ENCODE measurements at regions of chr17 and their contacts with region 1.

Region 1: DNA sequence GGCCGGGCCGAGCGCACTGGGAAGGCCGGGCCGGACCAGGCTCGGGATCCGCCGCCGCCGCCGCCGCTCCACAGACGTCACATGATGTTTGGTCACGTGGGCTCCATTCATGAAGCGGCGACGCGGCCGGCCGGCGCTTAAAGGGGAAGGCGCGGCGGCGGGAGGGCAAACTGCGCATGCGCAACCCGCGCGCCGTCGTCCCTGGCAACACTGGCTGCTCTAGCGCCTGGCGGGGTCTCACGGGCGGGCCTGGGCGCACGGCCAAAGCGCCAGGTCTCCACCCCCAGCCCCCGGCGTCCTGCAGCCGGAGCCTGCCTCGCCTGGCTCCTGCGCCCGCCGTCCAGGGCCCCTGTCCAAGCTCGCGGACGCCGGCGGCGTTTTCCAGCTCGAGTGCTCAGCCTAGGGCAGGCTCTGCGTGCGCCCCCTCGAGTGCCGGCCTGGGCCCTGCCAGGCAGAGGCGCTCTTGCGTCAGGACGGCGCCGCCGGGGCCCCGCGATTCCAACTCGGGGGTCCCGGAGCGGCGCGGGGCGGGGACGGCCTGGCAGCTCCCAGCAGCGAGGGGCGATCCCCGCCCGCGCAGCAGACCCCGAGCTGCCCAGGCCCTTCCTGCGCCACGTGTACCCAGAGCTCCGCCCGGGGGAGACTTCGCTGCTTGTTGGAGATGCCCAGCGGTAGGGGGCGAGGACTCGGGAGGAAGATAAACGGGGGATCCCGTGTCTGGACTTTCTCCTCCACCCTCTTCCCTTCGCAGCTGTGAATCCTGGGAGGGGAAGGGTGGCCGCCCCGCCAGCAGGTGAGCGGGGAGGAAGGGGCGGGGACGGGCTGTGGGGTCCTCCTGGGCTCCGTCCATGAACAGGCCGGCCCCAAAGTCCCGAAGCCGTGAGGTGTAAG is at the start of gene MAFG:
- DNase-seq: peak; percentile 96 to 98
- ATAC-seq: peak; percentile 20 to 40
- H3K4me3 ChIP-seq: peak within 1 kb of the TSS; percentile 90
- H3K27ac ChIP-seq: peak within 1 kb of the TSS; percentile 96 to 98
- H3K4me1 ChIP-seq: peaks cover 36% of the 10 kb centered on the region
- CTCF ChIP-seq: peak; percentile 74
- EP300 ChIP-seq: no peak
- POLR2A ChIP-seq: peak; percentile 33
- RAD21 ChIP-seq: peak in 1 of 2 experiments; percentile 54; a peak in 3 of 5 replicates
- polyA plus RNA-seq, gene MAFG: 41.6 and 47.9 TPM in 2 replicates

Region 2: DNA sequence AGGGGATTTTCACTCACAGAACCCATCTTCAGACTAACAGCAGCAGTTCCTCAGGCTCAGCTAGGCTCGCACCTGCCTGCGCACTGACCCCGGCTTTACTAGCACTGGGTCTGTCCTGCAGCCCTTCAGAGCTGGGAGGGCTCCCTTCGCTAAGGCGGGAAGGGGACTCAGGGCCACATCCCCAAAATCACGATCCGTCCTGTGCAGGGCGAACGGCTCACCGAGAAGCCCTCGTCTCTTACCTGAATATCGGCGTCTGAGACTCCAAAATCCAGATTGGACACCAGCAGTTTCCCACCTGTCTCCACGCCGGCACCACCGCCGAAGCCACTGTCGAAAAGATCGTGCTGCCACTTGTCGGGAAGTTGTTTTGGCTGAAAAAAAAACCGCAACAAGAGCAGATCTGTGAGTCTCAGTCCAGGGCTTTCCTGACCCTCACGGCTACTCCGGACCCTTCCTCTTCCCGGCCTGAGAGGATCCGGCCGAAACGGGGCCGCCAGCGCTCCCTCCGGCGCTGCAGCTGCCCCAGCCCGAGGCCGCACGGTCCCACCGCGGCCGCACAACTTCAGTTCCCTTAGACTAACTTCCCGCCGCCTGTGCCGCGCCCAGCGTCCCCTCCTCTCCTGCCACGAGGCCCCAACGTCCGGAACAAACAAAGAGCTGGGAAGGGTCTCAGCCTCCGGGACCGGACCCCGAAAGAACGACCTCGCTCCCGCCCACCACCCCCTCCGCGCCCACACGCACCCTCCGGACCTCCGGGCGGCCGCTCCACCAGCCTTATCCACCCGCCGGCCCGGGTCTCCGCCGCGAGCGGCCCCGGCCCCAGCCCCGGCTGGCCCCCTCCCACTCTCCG is 37.2 kb before region 1 on chr17:
- CTCF ChIA-PET with region 1: interaction called, 12 read pairs
- POLR2A ChIA-PET with region 1: interaction called, 3 read pairs
- DNase-seq: no peak
- ATAC-seq: no peak
- H3K4me3 ChIP-seq: peak overlapping the region; percentile 90
- H3K27ac ChIP-seq: peak overlapping the region; percentile 94 to 98
- H3K4me1 ChIP-seq: peaks cover 27% of the 10 kb centered on the region
- CTCF ChIP-seq: no peak
- EP300 ChIP-seq: no peak
- POLR2A ChIP-seq: no peak
- RAD21 ChIP-seq: no peak

Region 3: GRCh38 chr17:81911277-81911961 is 16.5 kb before region 1 on chr17 and contains the start of gene PCYT2:
- CTCF ChIA-PET with region 1: interaction called, 68 read pairs
- POLR2A ChIA-PET with region 1: interaction called, 6 read pairs
- DNase-seq: peak; percentile 93 to 99
- ATAC-seq: peak; percentile 72 to 83
- H3K4me3 ChIP-seq: peak within 1 kb of the TSS; percentile 71
- H3K27ac ChIP-seq: peak within 1 kb of the TSS; percentile 62 to 88
- H3K4me1 ChIP-seq: peaks cover 14% of the 10 kb centered on the region
- CTCF ChIP-seq: no peak
- EP300 ChIP-seq: no peak
- POLR2A ChIP-seq: peak; percentile 31; the same call in 1 of the 2 replicates
- RAD21 ChIP-seq: no peak
- polyA plus RNA-seq, gene PCYT2: 7.1 and 7.7 TPM in 2 replicates

Region 4: DNA sequence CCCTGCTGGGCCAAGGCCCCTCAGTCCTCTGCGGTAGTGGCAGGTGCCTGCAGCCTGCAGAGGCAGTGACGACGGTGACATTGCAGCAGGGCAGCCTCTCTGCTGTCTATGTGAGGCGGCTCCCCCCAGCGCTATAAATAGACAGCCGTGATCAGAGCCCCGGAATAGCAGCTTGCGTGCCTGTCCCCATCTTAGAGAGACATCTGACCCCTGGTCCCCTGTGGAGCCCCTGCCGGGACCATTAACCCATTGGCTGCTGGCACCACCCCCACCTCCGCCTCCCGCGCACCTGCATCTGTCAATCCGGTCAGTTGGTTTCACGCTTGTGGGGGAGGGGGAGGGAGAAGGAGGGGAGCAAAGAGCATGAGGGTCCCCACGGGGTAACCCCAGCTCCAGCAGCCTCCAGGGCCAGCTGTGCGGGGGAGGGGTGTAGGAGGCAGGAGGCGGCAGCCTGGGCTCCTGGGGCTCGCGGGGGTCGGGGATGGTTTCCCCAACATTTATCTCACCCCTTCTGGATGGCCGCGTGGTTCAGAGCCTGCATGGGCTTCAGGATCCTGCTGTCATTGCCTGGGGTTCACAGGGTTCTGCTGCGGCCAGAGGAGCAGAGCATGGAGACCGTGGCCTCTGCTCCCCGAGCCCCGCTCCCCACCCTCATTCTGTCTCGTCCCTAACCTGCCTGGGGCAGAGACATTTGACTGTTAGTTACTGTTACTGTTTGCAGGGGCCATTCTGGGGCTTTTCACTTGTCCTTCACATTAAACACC is 14.1 kb after region 1 on chr17:
- CTCF ChIA-PET with region 1: interaction called, 16 read pairs
- POLR2A ChIA-PET with region 1: interaction called, 3 read pairs
- DNase-seq: no peak
- ATAC-seq: no peak
- H3K4me3 ChIP-seq: no peak overlapping the region
- H3K27ac ChIP-seq: no peak overlapping the region
- H3K4me1 ChIP-seq: peaks cover 4% of the 10 kb centered on the region; the same call in 2 of the 3 replicates
- CTCF ChIP-seq: no peak
- EP300 ChIP-seq: no peak
- POLR2A ChIP-seq: no peak
- RAD21 ChIP-seq: no peak

Region 5: GRCh38 chr17:81948635-81949378 is 20.9 kb after region 1 on chr17:
- CTCF ChIA-PET with region 1: interaction called, 22 read pairs
- POLR2A ChIA-PET with region 1: no interaction called
- DNase-seq: no peak
- ATAC-seq: peak in 1 of 2 experiments; percentile 41; a peak in 1 of 6 replicates
- H3K4me3 ChIP-seq: no peak overlapping the region
- H3K27ac ChIP-seq: no peak overlapping the region
- H3K4me1 ChIP-seq: no peaks in the 10 kb centered on the region
- CTCF ChIP-seq: no peak
- EP300 ChIP-seq: no peak
- POLR2A ChIP-seq: no peak
- RAD21 ChIP-seq: no peak

Measured in A549 (cell line).